Aorta (tissue), 5 donors: ENCODE measurements at regions of chr12 and their contacts with region 1.

Region 1: DNA sequence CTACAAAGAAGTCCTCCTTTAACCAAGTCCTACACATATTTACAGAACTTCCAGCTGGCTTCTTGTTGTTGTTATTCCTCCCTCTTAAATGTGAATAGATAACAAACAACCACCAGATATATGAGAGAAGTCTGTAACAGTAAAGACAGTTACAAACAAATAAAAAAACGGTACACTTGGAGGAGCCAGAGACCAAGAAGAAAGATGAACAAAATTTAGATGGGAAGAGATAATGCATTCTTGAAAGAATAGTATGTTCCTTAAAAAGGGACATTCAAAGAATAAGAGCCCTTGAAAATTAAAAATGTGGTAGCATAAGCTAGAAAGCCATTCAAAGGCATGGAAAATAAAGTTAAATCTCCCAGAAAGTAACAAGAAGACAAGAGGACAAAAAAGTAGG is 25.9 kb downstream of the SLCO1A2 start:
- DNase-seq: no peak
- ATAC-seq: no peak
- H3K4me3 ChIP-seq: no peak overlapping the region
- H3K27ac ChIP-seq: no peak overlapping the region
- H3K4me1 ChIP-seq: no peaks in the 10 kb centered on the region
- H3K27me3 ChIP-seq: no peaks in the 10 kb centered on the region

Region 2: GRCh38 chr12:21330682-21331253 is 22.0 kb after region 1 on chr12:
- intact Hi-C with region 1: no loop called
- DNase-seq: no peak
- ATAC-seq: no peak
- H3K4me3 ChIP-seq: no peak overlapping the region
- H3K27ac ChIP-seq: no peak overlapping the region
- H3K4me1 ChIP-seq: peaks cover 0 to 4% of the 10 kb centered on the region in 2 donors
- H3K27me3 ChIP-seq: no peaks in the 10 kb centered on the region

Region 3: DNA sequence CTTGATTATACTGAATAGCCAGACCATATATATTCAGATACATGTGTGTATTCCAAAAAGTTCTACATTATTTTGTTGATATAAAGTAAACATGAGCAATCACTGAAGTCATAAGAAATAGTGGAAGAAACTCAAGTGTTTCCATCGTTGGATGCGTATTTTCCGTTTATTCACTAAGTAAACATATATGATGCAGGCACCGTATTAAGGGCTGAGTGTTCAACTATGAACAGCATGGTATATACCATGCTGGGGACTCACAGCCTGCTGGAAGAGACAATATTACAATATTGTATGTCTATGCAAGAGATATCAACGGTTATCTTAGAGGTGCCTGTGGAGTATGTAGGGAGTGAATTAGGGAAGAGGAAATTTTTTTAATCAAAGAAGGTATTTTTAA is 129.9 kb after region 1 on chr12:
- intact Hi-C with region 1: loop called in 1 of 2 experiments (anchors 10 kb)
- DNase-seq: no peak
- ATAC-seq: no peak
- H3K4me3 ChIP-seq: peak overlapping the region in 1 of 2 donors; percentile 91
- H3K27ac ChIP-seq: no peak overlapping the region
- H3K4me1 ChIP-seq: no peaks in the 10 kb centered on the region
- H3K27me3 ChIP-seq: no peaks in the 10 kb centered on the region